ENCODE measurements at regions of chr20 and their contacts with region 1.

Region 1: DNA sequence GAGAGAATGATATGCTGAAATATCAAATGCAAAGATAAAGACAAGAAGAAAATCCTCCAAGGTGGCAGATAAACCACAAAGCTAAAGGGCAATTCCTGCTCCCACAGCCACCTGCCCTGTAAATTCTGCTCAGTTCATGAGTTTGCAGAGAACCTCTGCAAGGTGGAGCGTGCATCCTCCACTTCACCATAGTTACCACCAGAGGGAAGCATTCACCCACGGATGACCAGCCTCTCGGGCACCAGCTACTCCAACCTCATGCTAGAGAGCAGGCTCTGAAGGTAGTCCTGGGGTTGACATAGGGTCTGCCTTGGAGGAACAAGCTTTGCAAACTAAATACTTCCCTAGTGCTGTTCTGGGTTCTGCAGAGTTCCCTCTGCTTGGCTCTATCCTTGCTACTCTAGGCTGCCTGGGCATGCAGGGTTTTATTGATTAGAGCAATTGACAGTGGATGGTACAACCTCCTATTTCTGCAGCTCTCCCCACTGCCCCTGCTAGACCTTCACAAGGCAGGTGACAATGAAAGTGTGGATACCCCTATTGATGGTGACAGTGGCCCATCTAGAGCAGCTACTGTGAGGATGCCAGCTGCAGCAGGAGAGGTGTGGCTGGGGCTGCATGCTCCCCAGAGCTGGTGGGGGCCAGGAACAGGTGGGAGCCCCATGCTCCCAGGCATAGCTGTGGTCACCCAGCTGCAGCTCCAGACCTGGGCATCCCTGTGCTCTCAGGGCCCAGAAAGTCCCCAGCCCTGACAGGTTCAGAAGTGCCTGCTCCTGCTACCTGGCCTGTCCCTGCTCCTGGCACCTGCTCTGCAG is 51.1 kb downstream of the GGTLC1 start:
- DNase-seq: peak; percentile 76 to 79
- H3K4me3 ChIP-seq: no peak overlapping the region
- H3K4me3 Mint-ChIP-seq: no peak overlapping the region
- H3K27ac Mint-ChIP-seq: no peak overlapping the region
- H3K4me1 ChIP-seq: no peaks in the 10 kb centered on the region
- H3K4me1 Mint-ChIP-seq: no peaks in the 10 kb centered on the region
- H3K27me3 ChIP-seq: no peaks in the 10 kb centered on the region
- H3K27me3 Mint-ChIP-seq: peaks cover 6% of the 10 kb centered on the region
- CTCF ChIP-seq: peak; percentile 83 to 90

Region 2: DNA sequence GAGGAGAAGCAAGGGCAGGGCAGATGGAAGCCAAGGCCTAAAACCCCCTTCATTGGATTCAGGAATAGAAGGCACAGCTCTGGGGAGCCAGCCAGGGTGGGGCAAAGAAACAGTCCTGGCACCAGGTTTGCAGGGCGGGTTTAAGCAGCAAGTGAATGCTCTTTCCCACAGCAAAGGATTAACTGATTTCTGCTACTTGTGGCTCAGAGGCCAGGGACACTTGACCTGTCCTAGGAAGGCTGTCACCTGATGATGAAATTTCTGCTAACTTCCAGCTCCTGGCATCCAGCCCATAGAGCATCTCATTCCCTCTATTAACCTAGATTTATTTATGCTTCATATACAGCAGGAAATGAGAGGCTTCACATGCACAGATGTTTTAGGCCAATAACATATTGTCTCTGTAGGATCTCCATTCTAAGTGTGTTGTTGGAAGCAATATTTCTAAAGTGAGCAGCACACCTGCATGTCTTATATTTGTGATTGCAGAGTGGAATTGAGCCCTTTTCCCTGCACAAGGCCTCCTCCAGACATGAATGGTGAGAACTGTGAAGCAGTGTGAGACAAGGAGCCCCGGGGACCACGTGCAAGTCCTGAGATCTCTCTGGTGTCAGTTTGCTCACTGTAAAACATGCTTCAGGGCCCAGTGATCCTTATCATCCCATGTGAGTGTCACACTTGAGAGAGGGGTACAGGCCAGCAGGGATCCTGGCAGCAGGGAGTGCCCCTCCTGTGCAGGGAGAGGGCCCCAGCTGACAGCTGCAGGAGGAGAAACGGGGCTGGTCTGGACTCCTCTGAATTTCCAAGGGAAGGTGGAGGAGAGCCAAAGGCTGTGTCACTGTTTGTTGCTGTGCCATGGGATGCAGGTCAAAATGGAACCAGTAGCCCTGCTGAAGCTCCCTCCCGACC is 16.8 kb before region 1 on chr20:
- CTCF ChIA-PET with region 1: no interaction called
- POLR2A ChIA-PET with region 1: no interaction called
- intact Hi-C with region 1: no loop called
- DNase-seq: no peak
- H3K4me3 ChIP-seq: no peak overlapping the region
- H3K4me3 Mint-ChIP-seq: no peak overlapping the region
- H3K27ac Mint-ChIP-seq: no peak overlapping the region
- H3K4me1 ChIP-seq: no peaks in the 10 kb centered on the region
- H3K4me1 Mint-ChIP-seq: no peaks in the 10 kb centered on the region
- H3K27me3 ChIP-seq: no peaks in the 10 kb centered on the region
- H3K27me3 Mint-ChIP-seq: peaks cover 3% of the 10 kb centered on the region
- CTCF ChIP-seq: no peak

Region 3: GRCh38 chr20:23988561-23988960 is 51.1 kb after region 1 on chr20 and contains the start of gene GGTLC1:
- CTCF ChIA-PET with region 1: no interaction called
- POLR2A ChIA-PET with region 1: no interaction called
- intact Hi-C with region 1: loop called (anchors 5 kb)
- DNase-seq: no peak
- H3K4me3 ChIP-seq: no peak within 1 kb of the TSS
- H3K4me3 Mint-ChIP-seq: no peak within 1 kb of the TSS
- H3K27ac Mint-ChIP-seq: no peak within 1 kb of the TSS
- H3K4me1 ChIP-seq: peaks cover 3% of the 10 kb centered on the region; the same call in 1 of the 2 replicates
- H3K4me1 Mint-ChIP-seq: peaks cover 7% of the 10 kb centered on the region
- H3K27me3 ChIP-seq: no peaks in the 10 kb centered on the region
- H3K27me3 Mint-ChIP-seq: no peaks in the 10 kb centered on the region
- CTCF ChIP-seq: no peak
- total RNA-seq, gene GGTLC1: 0.68 and 1.3 TPM in 2 replicates

Region 4: GRCh38 chr20:24164360-24164759 is 226.8 kb after region 1 on chr20:
- CTCF ChIA-PET with region 1: interaction called, 4 read pairs
- POLR2A ChIA-PET with region 1: no interaction called
- intact Hi-C with region 1: loop called (anchors 1 kb)
- DNase-seq: peak; percentile 54 to 67
- H3K4me3 ChIP-seq: no peak overlapping the region
- H3K4me3 Mint-ChIP-seq: no peak overlapping the region
- H3K27ac Mint-ChIP-seq: no peak overlapping the region
- H3K4me1 ChIP-seq: no peaks in the 10 kb centered on the region
- H3K4me1 Mint-ChIP-seq: no peaks in the 10 kb centered on the region
- H3K27me3 ChIP-seq: no peaks in the 10 kb centered on the region
- H3K27me3 Mint-ChIP-seq: peaks cover 3% of the 10 kb centered on the region
- CTCF ChIP-seq: peak; percentile 56 to 80

Region 5: GRCh38 chr20:24350923-24351368 is 413.4 kb after region 1 on chr20:
- CTCF ChIA-PET with region 1: no interaction called
- POLR2A ChIA-PET with region 1: no interaction called
- intact Hi-C with region 1: no loop called
- DNase-seq: no peak
- H3K4me3 ChIP-seq: no peak overlapping the region
- H3K4me3 Mint-ChIP-seq: no peak overlapping the region
- H3K27ac Mint-ChIP-seq: no peak overlapping the region
- H3K4me1 ChIP-seq: no peaks in the 10 kb centered on the region
- H3K4me1 Mint-ChIP-seq: no peaks in the 10 kb centered on the region
- H3K27me3 ChIP-seq: no peaks in the 10 kb centered on the region; the same call in 1 of the 2 replicates
- H3K27me3 Mint-ChIP-seq: peaks cover 3% of the 10 kb centered on the region
- CTCF ChIP-seq: no peak